Activated CD4-positive, alpha-beta T cell treated with anti-CD3 and anti-CD28 coated beads, Interleukin-2, amount 10 ng/mL, durations not matched to agents 24 days and 14 days (primary cell): ENCODE measurements at regions of chr1 and their contacts with region 1.

Region 1: GRCh38 chr1:51235673-51236530 is at the start of gene RNF11:
- DNase-seq: peak; percentile 98
- H3K4me3 Mint-ChIP-seq: peak within 1 kb of the TSS; percentile 85
- H3K27ac Mint-ChIP-seq: peak within 1 kb of the TSS; percentile 63
- H3K4me1 Mint-ChIP-seq: peaks cover 30% of the 10 kb centered on the region
- H3K27me3 Mint-ChIP-seq: peaks cover 2% of the 10 kb centered on the region
- total RNA-seq, gene RNF11: 24.6 and 33.6 TPM in 2 replicates

Region 2: DNA sequence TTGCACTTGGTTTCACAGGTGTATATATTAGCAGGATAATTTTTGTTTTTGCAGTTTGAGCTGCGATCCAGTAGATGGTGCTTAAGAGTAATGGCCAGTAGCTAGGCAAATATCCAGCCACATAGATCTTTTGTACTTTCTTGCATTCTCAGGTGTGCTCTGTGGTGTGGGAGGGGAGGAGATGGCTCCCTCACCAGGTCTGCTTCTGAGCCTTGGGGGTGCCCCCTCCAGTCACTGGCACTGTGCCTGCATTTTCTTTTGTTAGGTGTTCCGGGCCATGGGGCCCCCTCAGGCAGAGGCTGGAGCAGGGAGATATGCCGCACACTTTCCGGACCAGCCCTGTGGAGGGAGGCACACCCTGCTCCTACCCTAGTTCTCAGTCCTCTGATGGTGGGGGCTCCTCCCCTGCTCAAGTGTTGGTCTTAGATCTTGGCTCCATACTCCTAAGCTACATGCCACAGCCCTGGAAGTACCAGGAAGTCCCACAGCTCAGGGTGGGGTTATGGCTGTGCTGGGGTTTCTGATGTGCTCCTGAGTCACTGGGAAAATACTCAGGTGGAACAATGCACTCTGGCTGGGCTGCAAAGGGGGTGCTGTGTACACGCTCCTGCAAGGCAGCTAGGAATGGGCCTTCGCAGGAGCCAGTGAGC is 615.1 kb before region 1 on chr1:
- intact Hi-C with region 1: no loop called
- DNase-seq: no peak
- H3K4me3 Mint-ChIP-seq: no peak overlapping the region
- H3K27ac Mint-ChIP-seq: no peak overlapping the region
- H3K4me1 Mint-ChIP-seq: no peaks in the 10 kb centered on the region
- H3K27me3 Mint-ChIP-seq: no peaks in the 10 kb centered on the region

Region 3: DNA sequence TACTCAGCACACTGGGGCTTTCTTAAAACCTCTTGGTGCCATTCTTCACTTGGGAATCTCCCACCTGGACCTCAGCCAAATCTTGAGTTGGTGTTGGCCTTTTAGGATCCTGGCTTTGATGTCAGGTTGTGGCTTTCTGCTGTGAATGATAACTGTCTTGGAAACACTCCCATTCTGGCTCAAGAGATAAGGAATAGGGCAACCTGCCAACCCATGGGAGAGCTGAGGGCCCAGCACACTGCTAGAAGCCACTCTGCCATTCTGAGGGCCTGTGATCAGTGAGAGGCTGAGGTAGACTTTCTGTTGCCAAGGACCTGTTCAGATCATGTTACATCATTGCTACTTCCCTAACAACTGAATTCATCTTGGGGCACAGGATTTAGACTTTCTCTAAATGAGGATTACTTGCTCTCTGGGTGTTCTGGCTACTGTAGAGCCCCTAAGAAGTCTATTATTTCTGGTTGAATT is 48.6 kb after region 1 on chr1:
- intact Hi-C with region 1: loop called (anchors 5 kb)
- DNase-seq: no peak
- H3K4me3 Mint-ChIP-seq: no peak overlapping the region
- H3K27ac Mint-ChIP-seq: peak overlapping the region; percentile 63
- H3K4me1 Mint-ChIP-seq: peaks cover 22% of the 10 kb centered on the region
- H3K27me3 Mint-ChIP-seq: peaks cover 4% of the 10 kb centered on the region